B cell (primary cell): ENCODE measurements at regions of chr1 and their contacts with region 1.

Region 1: GRCh38 chr1:83761167-83762038 is 237.5 kb downstream of the TTLL7 start:
- DNase-seq: peak; percentile 82
- ATAC-seq: peak; percentile 97
- H3K4me3 ChIP-seq: no peak overlapping the region
- H3K4me3 Mint-ChIP-seq: peak overlapping the region; percentile 68
- H3K27ac ChIP-seq: peak overlapping the region; percentile 21 to 32
- H3K27ac Mint-ChIP-seq: peak overlapping the region; percentile 79
- H3K4me1 ChIP-seq: peaks cover 22 to 37% of the 10 kb centered on the region in 2 donors
- H3K4me1 Mint-ChIP-seq: peaks cover 38% of the 10 kb centered on the region
- H3K27me3 ChIP-seq: no peaks in the 10 kb centered on the region
- H3K27me3 Mint-ChIP-seq: no peaks in the 10 kb centered on the region
- CTCF ChIP-seq: no peak

Region 2: DNA sequence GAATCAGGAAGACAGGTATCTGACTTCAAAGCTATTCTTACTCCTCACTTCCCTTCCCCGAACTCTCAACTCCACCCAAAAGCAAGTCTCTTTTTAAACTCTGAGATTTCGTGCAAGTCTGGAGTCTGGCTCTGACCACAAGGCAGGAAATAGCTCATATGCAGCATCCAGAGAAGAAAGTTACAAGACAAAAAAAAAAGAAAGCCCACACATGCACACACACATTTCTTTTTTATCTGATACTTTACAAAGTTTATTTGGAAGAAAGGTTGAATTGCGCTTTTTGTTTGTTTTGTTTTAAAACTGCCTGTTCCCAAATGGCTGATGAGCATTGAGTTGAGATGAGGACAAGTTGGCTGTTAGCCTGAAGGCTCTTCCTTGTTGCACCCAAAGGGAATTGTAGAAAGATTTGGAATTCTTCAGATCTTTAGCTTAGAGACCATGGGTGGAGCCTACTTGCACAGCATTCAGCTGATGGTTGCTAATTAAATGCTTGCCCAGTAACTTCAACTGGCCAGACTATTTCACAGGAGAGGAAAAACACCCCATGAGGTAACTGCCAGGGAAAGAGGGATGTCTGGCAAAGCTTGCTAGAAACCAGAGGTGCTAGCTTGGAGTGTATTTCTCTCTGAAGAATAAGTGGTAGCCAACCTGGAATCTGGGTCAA is 252.8 kb before region 1 on chr1:
- CTCF ChIA-PET with region 1: no interaction called
- POLR2A ChIA-PET with region 1: no interaction called
- intact Hi-C with region 1: loop called (anchors 10 kb)
- DNase-seq: peak; percentile 15
- ATAC-seq: peak; percentile 66
- H3K4me3 ChIP-seq: peak overlapping the region in 1 of 5 experiments; percentile 21
- H3K4me3 Mint-ChIP-seq: peak overlapping the region; percentile 35
- H3K27ac ChIP-seq: peak overlapping the region in 1 of 2 donors; percentile 31
- H3K27ac Mint-ChIP-seq: peak overlapping the region; percentile 50
- H3K4me1 ChIP-seq: peaks cover 7 to 22% of the 10 kb centered on the region in 2 donors
- H3K4me1 Mint-ChIP-seq: peaks cover 23% of the 10 kb centered on the region
- H3K27me3 ChIP-seq: no peaks in the 10 kb centered on the region
- H3K27me3 Mint-ChIP-seq: no peaks in the 10 kb centered on the region
- CTCF ChIP-seq: no peak

Region 3: DNA sequence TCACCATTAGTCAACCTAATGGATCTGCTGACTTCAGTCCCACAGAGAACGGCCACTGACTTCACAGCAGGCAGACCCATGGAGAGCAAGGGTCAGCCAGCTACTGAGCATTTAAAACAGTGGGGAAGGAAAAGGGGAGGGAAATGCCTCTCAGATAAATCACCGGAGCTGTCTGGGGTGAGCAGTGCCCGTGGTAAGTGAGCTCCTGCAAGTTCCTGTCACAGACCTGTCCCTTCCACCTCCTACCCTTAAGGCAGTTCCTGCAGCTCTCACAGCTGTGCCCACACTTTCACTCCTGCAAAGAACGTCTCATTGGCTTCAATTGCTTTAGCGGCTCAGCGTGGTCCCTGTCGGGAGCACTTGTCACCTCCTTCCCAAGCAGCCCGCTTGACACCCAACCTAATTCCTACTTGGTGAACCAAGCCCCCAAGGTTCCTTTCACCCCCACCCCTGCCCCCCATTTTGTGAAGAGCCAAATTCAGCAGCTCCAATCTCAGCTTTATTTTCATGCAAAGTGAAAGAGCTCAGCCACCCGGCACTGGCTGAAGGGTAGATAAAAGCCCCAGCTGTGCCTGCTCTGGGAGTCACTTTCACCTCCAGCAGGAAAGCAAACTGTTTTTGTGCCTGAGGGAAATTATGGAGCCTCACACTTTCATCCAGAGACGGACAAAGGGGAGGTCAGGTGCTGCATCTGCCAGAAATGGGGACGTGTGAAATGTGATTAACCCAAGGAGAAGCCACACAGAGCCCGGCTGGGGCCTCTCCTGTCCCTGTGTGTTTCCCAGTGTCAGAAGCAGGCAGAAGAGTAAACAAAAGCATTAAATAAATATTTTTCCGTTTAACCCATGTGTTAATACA is 68.7 kb before region 1 on chr1:
- CTCF ChIA-PET with region 1: no interaction called
- POLR2A ChIA-PET with region 1: interaction called, 7 read pairs
- intact Hi-C with region 1: loop called (anchors 5 kb)
- DNase-seq: peak; percentile 17
- ATAC-seq: peak; percentile 68
- H3K4me3 ChIP-seq: peak overlapping the region; percentile 30 to 68 (median 45)
- H3K4me3 Mint-ChIP-seq: peak overlapping the region; percentile 89
- H3K27ac ChIP-seq: peak overlapping the region in 1 of 2 donors; percentile 43
- H3K27ac Mint-ChIP-seq: peak overlapping the region; percentile 77
- H3K4me1 ChIP-seq: peaks cover 18 to 39% of the 10 kb centered on the region in 2 donors
- H3K4me1 Mint-ChIP-seq: peaks cover 51% of the 10 kb centered on the region
- H3K27me3 ChIP-seq: peaks cover 0 to 4% (median 0%) of the 10 kb centered on the region in 4 experiments
- H3K27me3 Mint-ChIP-seq: peaks cover 4% of the 10 kb centered on the region
- CTCF ChIP-seq: no peak

Region 4: GRCh38 chr1:83860490-83861221 is 99.3 kb after region 1 on chr1:
- CTCF ChIA-PET with region 1: interaction called, 4 read pairs
- POLR2A ChIA-PET with region 1: no interaction called
- intact Hi-C with region 1: loop called (anchors 5 kb)
- DNase-seq: peak; percentile 80
- ATAC-seq: peak; percentile 85
- H3K4me3 ChIP-seq: peak overlapping the region; percentile 21 to 86 (median 75)
- H3K4me3 Mint-ChIP-seq: peak overlapping the region; percentile 84
- H3K27ac ChIP-seq: peak overlapping the region; percentile 73 to 94
- H3K27ac Mint-ChIP-seq: peak overlapping the region; percentile 84
- H3K4me1 ChIP-seq: peaks cover 2 to 8% of the 10 kb centered on the region in 2 donors
- H3K4me1 Mint-ChIP-seq: peaks cover 9% of the 10 kb centered on the region
- H3K27me3 ChIP-seq: no peaks in the 10 kb centered on the region
- H3K27me3 Mint-ChIP-seq: no peaks in the 10 kb centered on the region
- CTCF ChIP-seq: peak; percentile 86